BJ (cell line): ENCODE measurements at regions of chr15 and their contacts with region 1.

Region 1: DNA sequence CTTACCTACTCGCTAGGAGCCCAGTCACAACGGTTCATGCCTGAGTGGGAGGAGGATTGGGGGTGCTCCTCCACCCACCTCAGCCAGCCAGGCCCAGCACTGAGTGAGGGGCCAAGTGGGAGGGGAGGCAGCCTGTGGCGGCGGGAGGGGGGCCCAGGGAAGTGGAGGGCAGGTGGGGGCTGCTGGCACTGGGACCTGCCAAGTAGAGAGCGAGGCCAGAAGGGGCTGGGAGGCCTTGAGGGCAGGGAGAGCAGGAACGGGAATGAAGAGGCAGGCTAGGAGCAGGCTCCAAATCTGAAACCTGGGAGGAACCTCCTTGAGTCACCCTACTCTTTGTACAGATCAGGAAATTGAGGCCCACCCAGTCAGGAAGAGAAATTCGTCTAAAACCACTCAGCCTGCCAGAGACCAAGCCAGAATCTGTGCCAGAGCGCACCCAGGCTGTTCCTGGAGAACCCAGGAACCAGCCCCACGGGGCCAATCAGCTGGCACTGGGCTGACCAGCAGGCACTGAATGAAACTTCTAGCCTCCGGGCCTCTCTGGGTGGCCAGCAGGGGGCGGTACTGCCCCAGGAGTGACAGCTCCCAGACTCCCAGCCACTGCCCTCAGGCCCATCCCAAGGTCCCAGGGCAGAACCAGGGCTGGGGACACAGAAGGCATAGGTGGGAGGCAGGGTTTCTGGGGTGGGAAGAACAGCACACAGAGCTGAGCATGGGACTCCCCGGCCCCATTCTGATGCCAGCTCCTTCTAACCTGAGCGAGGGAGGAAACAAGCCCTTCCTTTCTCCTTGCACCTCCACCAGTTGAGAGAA is 14.8 kb upstream of the CYP11A1 start:
- DNase-seq: no peak
- H3K4me3 ChIP-seq: no peak overlapping the region
- H3K27me3 ChIP-seq: no peaks in the 10 kb centered on the region
- CTCF ChIP-seq: peak; percentile 96

Region 2: GRCh38 chr15:74322181-74323076 is 59.8 kb before region 1 on chr15:
- CTCF ChIA-PET with region 1: no interaction called
- POLR2A ChIA-PET with region 1: no interaction called
- DNase-seq: no peak
- H3K4me3 ChIP-seq: no peak overlapping the region
- H3K27me3 ChIP-seq: no peaks in the 10 kb centered on the region
- CTCF ChIP-seq: peak; percentile 93

Region 3: DNA sequence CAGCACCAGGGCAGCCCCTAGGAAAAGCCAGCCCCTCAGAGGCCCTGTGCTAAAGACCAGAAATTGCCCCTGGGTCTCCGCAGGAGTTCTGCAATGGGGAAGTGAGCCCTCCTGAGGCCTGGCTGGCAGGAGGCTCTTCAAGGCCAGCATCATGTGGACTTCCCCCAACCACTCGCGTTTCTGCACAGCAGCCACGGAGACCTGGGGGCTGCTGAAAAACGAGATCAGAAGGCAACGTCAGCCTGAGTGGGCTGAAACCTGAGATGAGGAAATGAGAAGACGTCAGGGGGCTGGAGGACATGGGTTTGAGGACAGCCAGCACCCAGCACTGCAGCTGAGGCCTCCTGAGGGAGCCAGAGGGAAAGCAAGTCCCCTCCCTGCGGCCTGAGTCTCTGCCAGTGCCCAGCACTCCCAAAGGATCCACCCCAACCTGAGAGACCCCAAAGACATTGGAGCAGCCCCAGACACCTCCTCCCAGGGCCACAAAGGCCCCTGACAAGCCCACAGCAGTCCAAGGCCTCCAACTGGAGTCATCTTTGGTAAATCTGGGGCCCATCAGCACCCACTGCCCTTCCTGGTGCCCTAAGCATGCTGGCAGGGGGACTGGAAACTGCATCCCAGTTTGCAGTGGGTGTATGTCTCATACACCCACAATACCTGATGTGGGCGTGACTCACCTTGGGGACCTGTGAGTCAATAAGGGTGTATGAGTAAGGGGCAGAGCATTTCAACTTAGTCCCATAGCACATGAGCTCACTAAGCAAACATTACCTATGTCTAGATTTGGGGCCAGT is 14.4 kb after region 1 on chr15:
- CTCF ChIA-PET with region 1: interaction called, 12 read pairs
- POLR2A ChIA-PET with region 1: no interaction called
- DNase-seq: no peak
- H3K4me3 ChIP-seq: no peak overlapping the region
- H3K27me3 ChIP-seq: no peaks in the 10 kb centered on the region
- CTCF ChIP-seq: no peak

Region 4: DNA sequence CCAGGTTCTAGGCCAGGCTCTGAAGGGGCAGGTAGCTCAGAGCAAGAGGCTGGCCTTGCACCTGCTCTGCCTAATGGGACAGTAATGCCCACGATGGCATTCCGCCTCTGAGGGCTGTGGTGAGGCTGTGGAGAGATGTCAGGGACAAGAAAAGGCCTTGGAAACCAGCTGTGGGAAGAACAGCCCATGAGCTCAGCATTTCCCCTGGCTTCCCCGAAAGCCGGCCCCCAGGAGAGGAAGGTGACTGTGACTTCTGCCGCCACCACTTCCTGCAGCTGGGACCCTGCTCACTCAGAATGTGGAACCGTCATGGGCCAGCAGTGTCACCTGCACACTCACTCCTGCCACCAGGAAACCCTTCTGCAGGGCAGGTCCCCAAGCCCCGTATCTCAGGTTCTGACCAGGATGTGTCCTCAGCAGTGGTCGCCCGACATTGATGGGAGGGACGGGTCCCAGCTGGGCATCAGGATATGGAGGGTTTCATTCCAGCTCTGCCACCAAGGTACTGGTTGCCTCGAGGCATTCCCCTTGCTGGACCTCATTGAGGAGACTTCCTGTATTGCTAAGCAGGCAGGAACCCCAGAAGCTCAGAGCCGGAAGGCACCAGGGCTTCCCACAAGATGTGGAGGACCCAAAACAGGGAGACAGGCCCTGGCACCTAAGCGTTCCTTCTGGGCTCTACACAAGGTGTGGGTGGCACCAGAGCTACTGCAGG is 20.8 kb after region 1 on chr15:
- CTCF ChIA-PET with region 1: interaction called, 19 read pairs
- POLR2A ChIA-PET with region 1: no interaction called
- DNase-seq: no peak
- H3K4me3 ChIP-seq: no peak overlapping the region
- H3K27me3 ChIP-seq: no peaks in the 10 kb centered on the region
- CTCF ChIP-seq: no peak

Region 5: DNA sequence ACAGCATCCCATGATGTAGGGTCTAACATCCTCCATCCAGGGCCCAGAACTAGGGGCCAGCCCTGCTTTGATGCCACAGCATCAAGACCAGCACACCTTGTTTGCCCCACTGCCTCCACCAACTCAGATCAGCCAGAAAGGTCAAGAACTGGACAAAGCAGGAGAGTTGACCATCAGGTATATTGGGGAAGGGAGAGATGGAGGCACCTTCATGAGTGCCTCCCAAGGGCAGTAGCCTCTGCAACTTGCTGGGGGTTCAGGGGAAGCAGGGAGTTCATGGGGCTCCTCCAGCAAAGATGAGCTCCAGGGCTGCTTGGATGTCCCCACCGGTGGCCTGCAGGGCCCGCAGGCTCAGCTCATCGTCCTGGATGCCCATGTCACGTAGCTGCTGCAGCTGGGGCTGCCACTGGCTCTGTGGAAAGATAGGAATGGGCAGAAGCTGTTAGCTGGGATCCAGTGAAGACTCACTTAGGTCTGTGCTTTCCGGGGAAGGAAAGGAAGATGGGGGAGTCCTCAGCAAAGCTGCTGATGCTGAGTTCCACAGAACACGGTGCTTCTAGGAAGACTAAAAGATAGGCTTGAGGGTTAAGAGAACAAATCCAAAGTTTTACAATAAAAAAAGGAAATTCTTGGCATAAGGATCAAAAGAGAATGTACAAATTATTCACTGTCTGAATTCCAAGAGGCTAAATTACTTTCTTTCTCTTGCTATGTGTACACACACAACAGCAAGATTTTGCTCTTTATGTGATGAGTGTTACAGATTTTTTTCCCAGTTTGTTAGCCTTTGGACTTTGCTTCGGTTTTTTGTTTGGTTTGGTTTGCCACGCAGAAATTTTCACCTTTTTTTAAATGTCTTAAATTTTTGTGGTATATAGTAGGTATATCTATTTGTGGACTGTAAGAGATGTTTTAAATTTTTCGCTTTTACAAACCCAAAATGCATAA is 63.9 kb after region 1 on chr15:
- CTCF ChIA-PET with region 1: interaction called, 622 read pairs
- POLR2A ChIA-PET with region 1: no interaction called
- DNase-seq: no peak
- H3K4me3 ChIP-seq: no peak overlapping the region
- H3K27me3 ChIP-seq: no peaks in the 10 kb centered on the region
- CTCF ChIP-seq: no peak

Region 6: GRCh38 chr15:74489518-74490338 is 107.5 kb after region 1 on chr15:
- CTCF ChIA-PET with region 1: interaction called, 14 read pairs
- POLR2A ChIA-PET with region 1: no interaction called
- DNase-seq: no peak
- H3K4me3 ChIP-seq: no peak overlapping the region
- H3K27me3 ChIP-seq: no peaks in the 10 kb centered on the region
- CTCF ChIP-seq: peak; percentile 72

Region 7: DNA sequence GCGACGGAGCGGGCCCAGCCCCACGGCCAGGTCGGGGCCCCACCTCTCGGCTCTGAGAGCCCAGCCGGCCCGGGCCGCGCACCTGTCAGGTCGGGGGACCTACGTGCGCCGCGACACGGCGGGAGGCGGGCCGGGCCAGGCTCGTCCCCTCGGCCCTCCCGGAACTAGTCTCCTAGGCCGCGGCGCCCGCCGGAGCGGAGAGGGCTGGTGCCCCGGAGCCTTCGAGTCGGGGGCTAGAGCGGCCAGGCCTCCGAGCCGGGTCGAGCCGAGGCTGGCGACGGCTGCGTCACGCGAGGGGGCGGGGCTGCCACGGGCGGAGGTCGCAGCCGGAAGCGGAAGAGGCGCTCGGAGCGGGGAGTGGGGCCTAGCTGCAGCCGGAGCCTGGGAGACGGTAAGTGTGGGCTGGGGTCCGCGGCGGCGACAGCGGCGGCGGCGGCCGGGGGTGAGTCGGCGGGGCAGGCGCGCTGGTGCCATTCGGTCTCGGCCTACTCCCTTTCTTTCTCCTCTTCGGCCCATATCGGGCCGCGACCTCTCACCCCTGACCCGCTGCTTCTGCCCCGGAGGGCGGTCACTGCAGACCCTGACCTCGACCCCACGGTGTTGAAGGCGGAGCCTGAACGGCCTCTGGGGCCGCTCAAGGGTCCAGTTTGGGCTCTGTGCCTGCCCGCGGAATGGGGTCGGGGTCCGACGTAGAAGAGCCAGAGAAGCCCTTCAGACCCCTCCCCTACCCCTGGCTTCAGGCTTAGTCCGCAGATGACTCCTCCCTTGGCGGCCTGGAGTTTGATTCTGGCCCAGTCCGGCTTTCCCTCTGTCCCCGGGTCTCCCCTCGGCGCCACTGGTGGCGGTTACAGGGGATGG is 233.5 kb after region 1 on chr15 and contains the start of gene CLK3:
- CTCF ChIA-PET with region 1: interaction called, 11 read pairs
- POLR2A ChIA-PET with region 1: interaction called, 4 read pairs
- DNase-seq: peak; percentile 49
- H3K4me3 ChIP-seq: peak within 1 kb of the TSS; percentile 98
- H3K27me3 ChIP-seq: no peaks in the 10 kb centered on the region
- CTCF ChIP-seq: no peak
- polyA plus RNA-seq, gene CLK3: 45.2 and 58.3 TPM in 2 replicates

Region 8: GRCh38 chr15:74937596-74938296 is 555.5 kb after region 1 on chr15 and contains the start of gene COX5A:
- CTCF ChIA-PET with region 1: no interaction called
- POLR2A ChIA-PET with region 1: interaction called, 10 read pairs
- DNase-seq: peak; percentile 87
- H3K4me3 ChIP-seq: peak within 1 kb of the TSS; percentile 99
- H3K27me3 ChIP-seq: no peaks in the 10 kb centered on the region
- CTCF ChIP-seq: no peak
- polyA plus RNA-seq, gene COX5A: 64.6 and 106 TPM in 2 replicates